CD14-positive monocyte (primary cell): ENCODE measurements at regions of chr11 and their contacts with region 1.

Region 1: GRCh38 chr11:117817368-117818040 is 7.0 kb downstream of the FXYD2 start:
- DNase-seq: peak; percentile 87 to 96 (median 89)
- H3K4me3 ChIP-seq: no peak overlapping the region
- H3K4me3 Mint-ChIP-seq: no peak overlapping the region
- H3K27ac ChIP-seq: peak overlapping the region; percentile 99 to 100
- H3K27ac Mint-ChIP-seq: peak overlapping the region; percentile 95 to 99 (median 99)
- H3K4me1 ChIP-seq: peaks cover 69% of the 10 kb centered on the region in 2 donors
- H3K4me1 Mint-ChIP-seq: peaks cover 60% of the 10 kb centered on the region
- H3K27me3 ChIP-seq: no peaks in the 10 kb centered on the region
- H3K27me3 Mint-ChIP-seq: peaks cover 0 to 3% (median 2%) of the 10 kb centered on the region in 3 donors
- CTCF ChIP-seq: peak; percentile 99

Region 2: GRCh38 chr11:117426269-117426685 is 391.2 kb before region 1 on chr11:
- intact Hi-C with region 1: loop called in 1 of 2 experiments (anchors 5 kb)
- DNase-seq: peak; percentile 30 to 52 (median 44)
- H3K4me3 ChIP-seq: no peak overlapping the region
- H3K4me3 Mint-ChIP-seq: no peak overlapping the region
- H3K27ac ChIP-seq: no peak overlapping the region
- H3K27ac Mint-ChIP-seq: no peak overlapping the region
- H3K4me1 ChIP-seq: no peaks in the 10 kb centered on the region
- H3K4me1 Mint-ChIP-seq: peaks cover 1% of the 10 kb centered on the region
- H3K27me3 ChIP-seq: no peaks in the 10 kb centered on the region
- H3K27me3 Mint-ChIP-seq: peaks cover 3 to 14% (median 5%) of the 10 kb centered on the region in 3 donors
- CTCF ChIP-seq: peak; percentile 96

Region 3: DNA sequence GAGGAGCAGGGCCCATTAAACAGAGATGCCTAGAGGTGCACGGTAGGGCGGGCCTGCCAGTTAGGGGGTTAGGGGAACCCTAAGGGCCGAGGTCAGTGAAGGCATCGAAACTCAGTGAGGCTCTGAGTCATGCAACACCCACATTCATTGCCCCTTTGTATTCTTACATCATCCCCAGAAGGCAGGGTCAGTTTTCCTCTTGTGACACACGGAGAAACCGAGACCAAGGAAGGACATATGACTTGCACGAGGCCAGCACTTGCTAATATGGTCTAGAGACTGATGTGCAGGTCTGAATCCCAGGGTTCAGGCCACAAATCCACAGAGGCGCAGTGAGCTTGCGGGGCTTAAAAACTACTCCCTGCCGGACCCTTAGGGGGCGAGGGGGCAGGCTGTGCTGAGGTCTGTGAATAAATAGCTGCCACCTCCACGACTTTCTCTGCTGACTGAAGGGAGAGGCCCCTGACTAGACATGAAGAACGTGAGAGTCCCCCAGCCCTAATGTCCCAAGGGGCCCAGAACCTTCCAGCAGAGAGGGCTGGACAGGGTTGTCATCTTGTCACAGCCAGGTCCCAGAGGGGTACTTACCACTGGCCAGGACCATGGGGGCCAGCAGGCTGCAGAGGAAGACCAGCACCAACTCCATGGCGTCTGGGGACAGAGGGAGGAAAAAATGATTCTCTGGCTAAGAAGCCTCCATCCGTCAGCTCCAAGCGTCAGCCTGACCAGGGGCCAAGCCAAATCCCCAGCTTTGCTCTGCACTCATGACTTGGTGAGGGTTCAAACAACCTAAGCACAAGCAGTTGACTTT is 24.8 kb after region 1 on chr11:
- intact Hi-C with region 1: no loop called
- DNase-seq: peak; percentile 96 to 100 (median 98)
- H3K4me3 ChIP-seq: peak overlapping the region in 1 of 3 experiments; percentile 21
- H3K4me3 Mint-ChIP-seq: peak overlapping the region; percentile 48 to 76
- H3K27ac ChIP-seq: peak overlapping the region; percentile 96 to 99
- H3K27ac Mint-ChIP-seq: peak overlapping the region; percentile 98 to 100 (median 99)
- H3K4me1 ChIP-seq: peaks cover 67% of the 10 kb centered on the region in 2 donors
- H3K4me1 Mint-ChIP-seq: peaks cover 66% of the 10 kb centered on the region
- H3K27me3 ChIP-seq: no peaks in the 10 kb centered on the region
- H3K27me3 Mint-ChIP-seq: peaks cover 0 to 2% (median 0%) of the 10 kb centered on the region in 3 donors
- CTCF ChIP-seq: no peak

Region 4: GRCh38 chr11:117900121-117900648 is 82.7 kb after region 1 on chr11:
- intact Hi-C with region 1: loop called in 1 of 2 experiments (anchors 5 kb)
- DNase-seq: peak; percentile 41 to 59 (median 41)
- H3K4me3 ChIP-seq: peak overlapping the region in 1 of 3 experiments; percentile 18
- H3K4me3 Mint-ChIP-seq: no peak overlapping the region
- H3K27ac ChIP-seq: peak overlapping the region; percentile 43 to 57
- H3K27ac Mint-ChIP-seq: peak overlapping the region; percentile 28 to 82 (median 71)
- H3K4me1 ChIP-seq: peaks cover 15 to 20% of the 10 kb centered on the region in 2 donors
- H3K4me1 Mint-ChIP-seq: peaks cover 21% of the 10 kb centered on the region
- H3K27me3 ChIP-seq: no peaks in the 10 kb centered on the region
- H3K27me3 Mint-ChIP-seq: peaks cover 0 to 3% (median 2%) of the 10 kb centered on the region in 3 donors
- CTCF ChIP-seq: no peak

Region 5: GRCh38 chr11:117985953-117986887 is 168.7 kb after region 1 on chr11 and contains the start of gene IL10RA:
- intact Hi-C with region 1: loop called in 1 of 2 experiments (anchors 5 kb)
- DNase-seq: peak; percentile 93 to 95 (median 94)
- H3K4me3 ChIP-seq: peak within 1 kb of the TSS; percentile 95 to 99 (median 98)
- H3K4me3 Mint-ChIP-seq: peak within 1 kb of the TSS; percentile 93 to 98
- H3K27ac ChIP-seq: peak within 1 kb of the TSS; percentile 96 to 100
- H3K27ac Mint-ChIP-seq: peak within 1 kb of the TSS; percentile 96 to 100 (median 98)
- H3K4me1 ChIP-seq: peaks cover 58 to 63% of the 10 kb centered on the region in 2 donors
- H3K4me1 Mint-ChIP-seq: peaks cover 74% of the 10 kb centered on the region
- H3K27me3 ChIP-seq: no peaks in the 10 kb centered on the region
- H3K27me3 Mint-ChIP-seq: peaks cover 0 to 1% (median 1%) of the 10 kb centered on the region in 3 donors
- CTCF ChIP-seq: no peak
- polyA plus RNA-seq, gene IL10RA: 152 to 413 (median 226) TPM

Region 6: GRCh38 chr11:118051611-118052461 is 234.3 kb after region 1 on chr11:
- intact Hi-C with region 1: loop called (anchors 2 kb)
- DNase-seq: no peak
- H3K4me3 ChIP-seq: no peak overlapping the region
- H3K4me3 Mint-ChIP-seq: no peak overlapping the region
- H3K27ac ChIP-seq: no peak overlapping the region
- H3K27ac Mint-ChIP-seq: peak overlapping the region in 2 of 7 donors; percentile 10 to 43
- H3K4me1 ChIP-seq: peaks cover 13 to 15% of the 10 kb centered on the region in 2 donors
- H3K4me1 Mint-ChIP-seq: peaks cover 28% of the 10 kb centered on the region
- H3K27me3 ChIP-seq: no peaks in the 10 kb centered on the region
- H3K27me3 Mint-ChIP-seq: peaks cover 4 to 6% (median 6%) of the 10 kb centered on the region in 3 donors
- CTCF ChIP-seq: no peak